Activated CD8-positive, alpha-beta memory T cell treated with anti-CD3 and anti-CD28 coated beads, Interleukin-2, amount 10 ng/mL, durations not matched to agents 7 days and 5 days (primary cell): ENCODE measurements at regions of chr17 and their contacts with region 1.

Region 1: GRCh38 chr17:51153210-51154072 is at the start of gene NME1:
- DNase-seq: peak; percentile 98
- ATAC-seq: peak; percentile 94
- H3K4me3 Mint-ChIP-seq: no peak within 1 kb of the TSS
- H3K27ac Mint-ChIP-seq: no peak within 1 kb of the TSS
- H3K4me1 Mint-ChIP-seq: peaks cover 22% of the 10 kb centered on the region
- H3K27me3 Mint-ChIP-seq: no peaks in the 10 kb centered on the region
- total RNA-seq, gene NME1: 143 to 248 TPM

Region 2: GRCh38 chr17:51000835-51001638 is 152.4 kb before region 1 on chr17:
- CTCF ChIA-PET with region 1: interaction called, 78 read pairs
- DNase-seq: no peak
- ATAC-seq: peak; percentile 76
- H3K4me3 Mint-ChIP-seq: no peak overlapping the region
- H3K27ac Mint-ChIP-seq: peak overlapping the region; percentile 33
- H3K4me1 Mint-ChIP-seq: peaks cover 4% of the 10 kb centered on the region
- H3K27me3 Mint-ChIP-seq: no peaks in the 10 kb centered on the region

Region 3: DNA sequence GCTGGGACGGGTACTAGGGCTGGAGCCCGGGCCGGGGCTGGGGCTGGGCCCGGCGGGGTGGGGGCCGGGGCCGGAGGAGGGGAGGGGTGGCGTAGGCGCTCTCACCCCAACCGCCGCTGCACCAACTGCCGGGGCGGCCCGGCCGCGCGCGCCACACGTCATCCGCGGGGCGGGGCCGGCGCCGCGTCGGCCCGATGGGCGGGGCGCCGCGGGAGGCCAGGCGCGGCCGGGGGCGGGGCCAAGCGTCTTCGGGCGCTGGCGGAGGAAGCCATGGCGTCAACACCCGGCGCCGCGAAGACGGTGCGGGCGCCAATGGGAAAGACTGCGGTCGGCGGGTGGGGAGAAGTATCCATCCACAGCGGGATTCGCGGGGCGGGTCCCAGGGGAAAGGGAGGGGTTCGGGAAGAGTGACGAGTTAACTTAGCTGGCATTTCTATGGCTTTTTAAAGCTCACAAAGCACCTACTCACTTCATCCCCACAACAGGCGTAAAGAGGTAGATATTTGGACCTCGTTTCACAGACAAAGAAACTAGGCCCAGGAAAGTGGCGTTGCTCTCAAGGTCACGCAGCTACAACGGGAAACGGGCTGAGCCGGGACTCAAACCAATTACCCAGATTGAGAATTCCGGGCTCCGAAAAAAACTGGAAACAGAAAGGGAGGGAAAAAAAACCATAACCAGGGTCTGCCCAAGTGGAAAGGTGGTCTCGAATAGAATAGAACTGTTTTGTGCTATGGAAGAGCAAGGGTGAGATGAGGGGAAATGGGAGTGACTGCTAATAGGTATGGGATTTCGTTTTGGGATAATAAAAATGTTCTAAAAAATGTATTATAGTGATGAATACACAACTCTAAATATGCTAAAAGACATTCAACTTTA is 32.5 kb before region 1 on chr17 and contains the start of gene SPAG9:
- CTCF ChIA-PET with region 1: interaction called, 19 read pairs
- DNase-seq: peak; percentile 93
- ATAC-seq: peak; percentile 81
- H3K4me3 Mint-ChIP-seq: peak within 1 kb of the TSS; percentile 94
- H3K27ac Mint-ChIP-seq: peak within 1 kb of the TSS; percentile 98
- H3K4me1 Mint-ChIP-seq: peaks cover 49% of the 10 kb centered on the region
- H3K27me3 Mint-ChIP-seq: no peaks in the 10 kb centered on the region
- total RNA-seq, gene SPAG9: 49.0 to 53.8 TPM

Region 4: GRCh38 chr17:51166197-51166986 is 13.0 kb after region 1 on chr17 and contains the start of gene NME2:
- CTCF ChIA-PET with region 1: interaction called, 15 read pairs
- DNase-seq: peak; percentile 80
- ATAC-seq: peak; percentile 87
- H3K4me3 Mint-ChIP-seq: peak within 1 kb of the TSS; percentile 97
- H3K27ac Mint-ChIP-seq: peak within 1 kb of the TSS; percentile 99
- H3K4me1 Mint-ChIP-seq: peaks cover 38% of the 10 kb centered on the region
- H3K27me3 Mint-ChIP-seq: no peaks in the 10 kb centered on the region
- total RNA-seq, gene NME2: 470 to 555 TPM